ENCODE measurements at regions of chr2 and their contacts with region 1.

Region 1: GRCh38 chr2:201780674-201781581 is at the start of gene ALS2:
- DNase-seq: peak; percentile 94
- H3K4me3 Mint-ChIP-seq: peak within 1 kb of the TSS; percentile 95
- H3K27ac Mint-ChIP-seq: peak within 1 kb of the TSS; percentile 85
- H3K4me1 Mint-ChIP-seq: peaks cover 26% of the 10 kb centered on the region
- H3K27me3 Mint-ChIP-seq: peaks cover 11% of the 10 kb centered on the region
- total RNA-seq, gene ALS2: 13.3 to 13.5 TPM

Region 2: DNA sequence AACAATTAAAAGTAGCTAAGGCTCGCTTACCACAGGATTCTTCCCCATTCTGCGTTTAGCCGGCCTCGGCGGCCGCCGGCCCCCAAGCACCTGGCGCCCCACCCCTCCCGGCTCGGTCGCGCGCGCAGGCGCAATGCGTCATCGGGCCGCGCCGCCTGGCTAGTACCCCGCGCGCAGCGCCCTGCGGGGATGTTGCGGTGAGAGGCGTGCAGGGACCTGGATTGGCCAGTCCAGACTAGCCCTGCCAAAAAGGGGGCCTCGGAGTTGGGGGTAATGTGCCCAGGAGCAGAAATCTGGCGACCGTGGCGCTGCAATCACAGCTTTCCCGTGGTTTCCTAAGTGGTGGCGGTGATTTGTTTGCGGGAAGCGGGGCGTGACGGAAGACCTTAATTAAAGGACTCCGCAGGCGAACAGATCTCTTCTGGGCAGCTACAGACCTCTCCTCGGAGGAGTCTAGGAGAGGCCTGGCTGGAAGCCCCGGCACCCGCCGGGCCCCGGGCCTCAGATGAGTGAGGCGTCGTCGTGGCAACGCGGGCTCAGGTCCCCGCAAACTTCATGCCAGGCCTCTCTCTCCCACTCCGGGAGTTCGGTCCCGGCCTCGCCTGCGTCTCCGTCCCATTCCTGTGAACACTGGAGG is 138.2 kb before region 1 on chr2:
- CTCF ChIA-PET with region 1: interaction called, 3 read pairs
- POLR2A ChIA-PET with region 1: interaction called, 11 read pairs
- DNase-seq: peak; percentile 87
- H3K4me3 Mint-ChIP-seq: peak overlapping the region; percentile 92
- H3K27ac Mint-ChIP-seq: peak overlapping the region; percentile 87
- H3K4me1 Mint-ChIP-seq: peaks cover 22% of the 10 kb centered on the region
- H3K27me3 Mint-ChIP-seq: peaks cover 1% of the 10 kb centered on the region

Region 3: DNA sequence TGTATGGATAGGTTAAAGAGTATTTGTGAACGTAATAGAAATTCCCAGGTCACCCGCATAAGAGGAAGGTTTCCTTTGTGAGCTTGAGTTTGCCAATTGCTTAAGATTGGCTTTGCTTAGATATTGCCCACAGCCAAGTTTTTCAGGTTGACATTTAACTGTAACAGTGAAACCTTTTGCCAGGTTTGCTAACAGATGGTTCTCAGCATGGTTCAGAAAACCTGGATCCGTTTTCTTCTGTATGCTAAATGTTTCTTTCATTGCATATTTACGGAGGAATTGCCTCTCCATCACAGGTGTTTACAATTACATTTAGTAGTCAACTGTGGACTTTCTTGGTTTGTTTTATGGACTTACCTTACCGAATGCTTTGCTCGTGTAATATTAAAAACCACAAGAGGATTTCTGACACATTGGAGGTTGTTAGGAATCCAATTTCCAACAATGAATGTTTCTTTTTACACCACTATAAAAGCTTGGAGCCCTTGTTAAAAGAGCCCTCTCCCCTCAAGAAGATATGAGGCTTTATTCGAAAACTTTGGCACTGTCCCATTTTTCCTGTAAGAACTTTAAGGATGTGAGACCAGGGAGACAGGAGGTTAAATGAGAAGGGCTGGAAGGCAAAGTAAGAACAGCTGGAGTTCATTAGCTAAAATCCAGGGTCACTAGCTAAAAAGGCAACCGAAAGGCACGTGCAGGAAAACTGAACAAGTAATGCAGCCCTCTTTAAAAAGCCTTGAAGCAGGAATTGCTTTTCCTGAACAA is 33.2 kb after region 1 on chr2:
- CTCF ChIA-PET with region 1: no interaction called
- POLR2A ChIA-PET with region 1: no interaction called
- DNase-seq: no peak
- H3K4me3 Mint-ChIP-seq: no peak overlapping the region
- H3K27ac Mint-ChIP-seq: no peak overlapping the region
- H3K4me1 Mint-ChIP-seq: no peaks in the 10 kb centered on the region
- H3K27me3 Mint-ChIP-seq: peaks cover 20% of the 10 kb centered on the region

Region 4: GRCh38 chr2:201839727-201840126 is 58.8 kb after region 1 on chr2:
- CTCF ChIA-PET with region 1: no interaction called
- POLR2A ChIA-PET with region 1: no interaction called
- DNase-seq: no peak
- H3K4me3 Mint-ChIP-seq: no peak overlapping the region
- H3K27ac Mint-ChIP-seq: no peak overlapping the region
- H3K4me1 Mint-ChIP-seq: no peaks in the 10 kb centered on the region
- H3K27me3 Mint-ChIP-seq: peaks cover 13% of the 10 kb centered on the region